ENCODE measurements at regions of chr6 and their contacts with region 1.

Region 1: GRCh38 chr6:26312501-26313390 is 52.3 kb upstream of the BTN3A2 start:
- DNase-seq: peak; percentile 60 to 80 (median 75)
- ATAC-seq: peak; percentile 77 to 93 (median 88)
- H3K4me3 ChIP-seq: peak overlapping the region; percentile 12 to 66 (median 50)
- H3K27ac ChIP-seq: peak overlapping the region in 9 of 12 donors; percentile 4 to 67 (median 27)
- H3K4me1 ChIP-seq: peaks cover 0 to 27% (median 7%) of the 10 kb centered on the region in 12 donors
- H3K27me3 ChIP-seq: peaks cover 0 to 11% (median 0%) of the 10 kb centered on the region in 9 donors
- CTCF ChIP-seq: no peak
- POLR2A ChIP-seq: no peak

Region 2: GRCh38 chr6:25485821-25486534 is 826.8 kb before region 1 on chr6:
- intact Hi-C with region 1: no loop called
- DNase-seq: peak; percentile 65 to 87 (median 66)
- ATAC-seq: peak in 3 of 4 donors; percentile 67 to 70 (median 68)
- H3K4me3 ChIP-seq: no peak overlapping the region
- H3K27ac ChIP-seq: peak overlapping the region in 5 of 12 donors; percentile 24 to 72 (median 41)
- H3K4me1 ChIP-seq: peaks cover 0 to 28% (median 15%) of the 10 kb centered on the region in 12 donors
- H3K27me3 ChIP-seq: no peaks in the 10 kb centered on the region
- CTCF ChIP-seq: no peak
- POLR2A ChIP-seq: no peak

Region 3: GRCh38 chr6:26329763-26330511 is 17.2 kb after region 1 on chr6:
- intact Hi-C with region 1: no loop called
- DNase-seq: no peak
- ATAC-seq: peak in 1 of 4 donors; percentile 39
- H3K4me3 ChIP-seq: peak overlapping the region in 2 of 12 donors; percentile 0 to 2
- H3K27ac ChIP-seq: no peak overlapping the region
- H3K4me1 ChIP-seq: peaks cover 0 to 40% (median 0%) of the 10 kb centered on the region in 12 donors
- H3K27me3 ChIP-seq: peaks cover 21 to 86% (median 77%) of the 10 kb centered on the region in 9 donors
- CTCF ChIP-seq: no peak
- POLR2A ChIP-seq: no peak

Region 4: GRCh38 chr6:26351544-26351953 is 38.8 kb after region 1 on chr6:
- intact Hi-C with region 1: no loop called
- DNase-seq: no peak
- ATAC-seq: no peak
- H3K4me3 ChIP-seq: no peak overlapping the region
- H3K27ac ChIP-seq: no peak overlapping the region
- H3K4me1 ChIP-seq: no peaks in the 10 kb centered on the region
- H3K27me3 ChIP-seq: no peaks in the 10 kb centered on the region
- CTCF ChIP-seq: no peak
- POLR2A ChIP-seq: no peak

Region 5: DNA sequence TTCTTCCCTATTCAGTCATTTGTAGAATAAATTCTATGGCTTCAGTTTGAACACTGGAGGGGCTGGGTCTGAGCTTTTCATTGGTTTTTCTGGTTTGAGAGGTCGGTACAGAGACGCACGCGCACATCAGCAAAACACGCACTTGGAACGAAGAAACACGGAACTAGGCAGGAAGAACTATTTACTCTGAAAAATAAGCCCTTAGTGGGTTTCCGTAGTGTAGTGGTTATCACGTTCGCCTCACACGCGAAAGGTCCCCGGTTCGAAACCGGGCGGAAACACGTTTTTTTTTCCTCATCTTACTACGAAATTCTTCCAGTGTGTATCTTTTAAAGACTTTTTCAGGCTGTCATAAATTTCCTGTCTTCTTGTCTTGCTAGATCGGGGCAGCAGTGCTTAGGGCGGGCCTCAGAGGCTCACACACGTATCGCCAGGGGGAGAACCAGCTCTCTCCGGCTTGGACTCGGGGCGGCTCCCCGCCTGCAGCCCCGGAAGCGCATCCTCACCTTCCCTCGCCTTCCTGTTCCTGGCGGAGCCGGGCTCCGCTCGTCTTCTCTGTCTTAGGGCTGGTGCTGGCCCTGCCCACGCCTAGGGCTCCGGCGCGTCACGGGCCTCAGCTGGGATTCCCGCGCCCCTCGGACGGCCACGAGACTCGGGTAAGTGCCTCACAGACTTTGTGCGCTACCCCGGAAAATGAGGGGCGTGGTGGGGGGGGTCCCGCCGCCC is 225.3 kb after region 1 on chr6 and contains the start of gene HMGN4:
- intact Hi-C with region 1: loop called in 1 of 10 experiments (anchors 10 kb)
- DNase-seq: peak; percentile 82 to 91 (median 87)
- ATAC-seq: peak; percentile 86 to 90 (median 90)
- H3K4me3 ChIP-seq: peak within 1 kb of the TSS; percentile 58 to 94 (median 76)
- H3K27ac ChIP-seq: peak within 1 kb of the TSS; percentile 75 to 96 (median 92)
- H3K4me1 ChIP-seq: peaks cover 0 to 48% (median 25%) of the 10 kb centered on the region in 12 donors
- H3K27me3 ChIP-seq: no peaks in the 10 kb centered on the region
- CTCF ChIP-seq: peak in 3 of 12 donors; percentile 19 to 40 (median 30)
- POLR2A ChIP-seq: peak in 1 of 2 donors; percentile 56
- total RNA-seq, gene HMGN4: 22.4 to 34.7 (median 32.1) TPM